ENCODE measurements at regions of chr2 and their contacts with region 1.

Region 1: GRCh38 chr2:74391580-74392448 is 11.7 kb upstream of the DCTN1 start:
- DNase-seq: peak; percentile 91 to 98 (median 95)
- ATAC-seq: peak; percentile 90
- H3K4me3 ChIP-seq: peak overlapping the region; percentile 67 to 87
- H3K4me3 Mint-ChIP-seq: peak overlapping the region; percentile 99
- H3K27ac ChIP-seq: peak overlapping the region; percentile 87 to 96
- H3K27ac Mint-ChIP-seq: peak overlapping the region; percentile 100
- H3K4me1 ChIP-seq: peaks cover 20% of the 10 kb centered on the region
- H3K4me1 Mint-ChIP-seq: peaks cover 9% of the 10 kb centered on the region
- H3K27me3 ChIP-seq: no peaks in the 10 kb centered on the region
- H3K27me3 Mint-ChIP-seq: no peaks in the 10 kb centered on the region
- CTCF ChIP-seq: peak; percentile 96

Region 2: GRCh38 chr2:74250189-74250631 is 141.6 kb before region 1 on chr2:
- CTCF ChIA-PET with region 1: interaction called, 14 read pairs
- POLR2A ChIA-PET with region 1: no interaction called
- intact Hi-C with region 1: loop called in 1 of 2 experiments (anchors 2 kb)
- DNase-seq: peak; percentile 7 to 79 (median 54)
- ATAC-seq: peak; percentile 75
- H3K4me3 ChIP-seq: no peak overlapping the region
- H3K4me3 Mint-ChIP-seq: no peak overlapping the region
- H3K27ac ChIP-seq: no peak overlapping the region
- H3K27ac Mint-ChIP-seq: no peak overlapping the region
- H3K4me1 ChIP-seq: peaks cover 3% of the 10 kb centered on the region
- H3K4me1 Mint-ChIP-seq: peaks cover 2% of the 10 kb centered on the region
- H3K27me3 ChIP-seq: no peaks in the 10 kb centered on the region
- H3K27me3 Mint-ChIP-seq: no peaks in the 10 kb centered on the region
- CTCF ChIP-seq: peak; percentile 83

Region 3: GRCh38 chr2:74421221-74421870 is 29.5 kb after region 1 on chr2 and contains the starts of genes C2orf81 and WDR54:
- CTCF ChIA-PET with region 1: interaction called, 5 read pairs
- POLR2A ChIA-PET with region 1: interaction called, 14 read pairs
- intact Hi-C with region 1: loop called (anchors 1 kb)
- DNase-seq: peak; percentile 90 to 98 (median 95)
- ATAC-seq: peak; percentile 88
- H3K4me3 ChIP-seq: peak within 1 kb of the TSS; percentile 72 to 92
- H3K4me3 Mint-ChIP-seq: peak within 1 kb of the TSS; percentile 98
- H3K27ac ChIP-seq: peak within 1 kb of the TSS; percentile 96 to 97
- H3K27ac Mint-ChIP-seq: peak within 1 kb of the TSS; percentile 96
- H3K4me1 ChIP-seq: peaks cover 20% of the 10 kb centered on the region
- H3K4me1 Mint-ChIP-seq: peaks cover 17% of the 10 kb centered on the region
- H3K27me3 ChIP-seq: no peaks in the 10 kb centered on the region
- H3K27me3 Mint-ChIP-seq: no peaks in the 10 kb centered on the region
- CTCF ChIP-seq: no peak
- total RNA-seq, gene C2orf81: 0.75 to 1.8 TPM
- total RNA-seq, gene WDR54: 18.4 to 19.8 TPM

Region 4: GRCh38 chr2:74436111-74436797 is 44.4 kb after region 1 on chr2:
- CTCF ChIA-PET with region 1: no interaction called
- POLR2A ChIA-PET with region 1: no interaction called
- intact Hi-C with region 1: no loop called
- DNase-seq: no peak
- ATAC-seq: no peak
- H3K4me3 ChIP-seq: no peak overlapping the region
- H3K4me3 Mint-ChIP-seq: no peak overlapping the region
- H3K27ac ChIP-seq: no peak overlapping the region
- H3K27ac Mint-ChIP-seq: no peak overlapping the region
- H3K4me1 ChIP-seq: peaks cover 14% of the 10 kb centered on the region
- H3K4me1 Mint-ChIP-seq: peaks cover 6% of the 10 kb centered on the region
- H3K27me3 ChIP-seq: peaks cover 5 to 11% of the 10 kb centered on the region in 2 experiments
- H3K27me3 Mint-ChIP-seq: peaks cover 14% of the 10 kb centered on the region
- CTCF ChIP-seq: no peak

Region 5: DNA sequence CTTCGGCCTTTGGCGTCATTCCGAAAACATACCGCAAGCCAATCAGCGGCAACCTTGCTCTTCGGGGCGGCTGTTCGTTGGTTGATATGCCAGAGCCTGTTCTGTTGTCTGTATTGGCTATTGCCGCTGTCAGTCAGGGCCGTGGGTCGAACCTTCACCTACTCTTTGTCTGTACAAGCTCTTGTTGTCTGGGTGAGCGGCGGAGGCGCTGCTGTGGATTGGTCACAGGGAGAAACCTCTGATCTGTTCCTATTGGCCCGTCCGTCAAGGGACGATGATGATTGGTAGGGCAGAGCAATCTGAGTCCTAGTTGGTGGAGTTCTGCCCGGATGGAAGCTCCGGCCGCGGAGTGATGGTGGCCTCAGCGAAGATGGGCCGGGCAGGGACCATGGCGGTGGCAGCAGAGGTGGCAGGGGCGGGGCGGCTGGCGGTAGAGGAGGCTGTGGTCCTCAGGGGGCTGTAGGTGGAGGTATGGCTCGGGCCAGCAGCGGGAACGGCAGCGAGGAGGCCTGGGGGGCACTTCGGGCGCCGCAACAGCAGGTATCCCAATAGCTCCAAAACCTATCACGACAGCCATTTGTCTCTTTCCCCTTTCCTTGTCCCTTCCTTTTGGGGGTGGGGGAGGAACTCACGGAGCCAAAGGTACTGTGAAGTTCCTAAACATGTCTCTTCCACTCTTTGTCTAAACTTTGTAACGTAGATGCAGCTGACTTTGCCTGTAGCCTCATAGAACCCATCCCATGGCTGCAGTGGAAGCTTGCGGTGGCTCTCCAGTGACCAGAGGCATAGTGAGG is 66.5 kb after region 1 on chr2 and contains the start of gene WBP1:
- CTCF ChIA-PET with region 1: interaction called, 3 read pairs
- POLR2A ChIA-PET with region 1: interaction called, 8 read pairs
- intact Hi-C with region 1: loop called (anchors 1 kb)
- DNase-seq: peak; percentile 96 to 100 (median 98)
- ATAC-seq: peak; percentile 77
- H3K4me3 ChIP-seq: peak within 1 kb of the TSS; percentile 84 to 95
- H3K4me3 Mint-ChIP-seq: peak within 1 kb of the TSS; percentile 97
- H3K27ac ChIP-seq: peak within 1 kb of the TSS; percentile 93 to 100
- H3K27ac Mint-ChIP-seq: peak within 1 kb of the TSS; percentile 99
- H3K4me1 ChIP-seq: peaks cover 34% of the 10 kb centered on the region
- H3K4me1 Mint-ChIP-seq: peaks cover 57% of the 10 kb centered on the region
- H3K27me3 ChIP-seq: no peaks in the 10 kb centered on the region
- H3K27me3 Mint-ChIP-seq: no peaks in the 10 kb centered on the region
- CTCF ChIP-seq: no peak
- total RNA-seq, gene WBP1: 68.5 to 70.6 TPM

Region 6: DNA sequence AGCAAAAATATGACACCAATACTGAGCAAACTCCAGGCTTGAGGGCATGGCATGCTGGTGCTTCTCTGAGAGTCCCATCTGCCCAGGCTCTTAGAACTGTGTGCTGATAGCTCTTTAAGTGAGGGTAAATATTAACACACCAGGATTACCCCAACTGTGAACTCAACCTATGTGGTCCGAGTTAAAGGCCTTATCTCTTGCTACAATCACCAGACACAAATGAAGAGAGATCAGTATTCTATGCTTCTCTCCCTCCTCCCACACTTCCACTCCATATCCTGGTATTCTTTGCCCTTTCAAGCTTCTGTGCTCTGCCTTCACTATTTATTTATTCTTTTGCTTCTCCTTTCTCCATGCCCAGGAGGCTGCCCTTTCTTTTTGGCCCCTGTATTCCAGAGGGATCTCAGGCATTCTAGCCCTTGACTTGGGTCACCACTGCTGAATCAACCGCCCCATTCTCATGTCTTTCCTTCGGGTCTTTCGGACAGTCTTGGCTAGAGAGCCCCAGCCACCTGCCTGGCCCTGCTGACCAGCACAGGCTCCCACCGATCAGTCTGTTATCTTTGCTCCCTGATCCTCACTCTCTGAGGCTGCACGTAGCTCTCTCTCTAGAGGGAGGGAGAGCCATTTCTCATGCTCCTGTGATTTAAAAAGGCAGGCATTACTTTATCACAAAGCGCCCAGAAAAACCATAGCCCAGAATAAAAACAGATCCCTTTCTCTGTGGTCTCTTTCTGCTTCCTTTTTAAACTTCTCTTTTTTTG is 424.9 kb after region 1 on chr2:
- CTCF ChIA-PET with region 1: no interaction called
- POLR2A ChIA-PET with region 1: no interaction called
- intact Hi-C with region 1: no loop called
- DNase-seq: no peak
- ATAC-seq: no peak
- H3K4me3 ChIP-seq: no peak overlapping the region
- H3K4me3 Mint-ChIP-seq: no peak overlapping the region
- H3K27ac ChIP-seq: no peak overlapping the region
- H3K27ac Mint-ChIP-seq: no peak overlapping the region
- H3K4me1 ChIP-seq: no peaks in the 10 kb centered on the region
- H3K4me1 Mint-ChIP-seq: peaks cover 8% of the 10 kb centered on the region
- H3K27me3 ChIP-seq: no peaks in the 10 kb centered on the region
- H3K27me3 Mint-ChIP-seq: peaks cover 14% of the 10 kb centered on the region
- CTCF ChIP-seq: no peak